ENCODE measurements at regions of chr14 and their contacts with region 1.

Region 1: GRCh38 chr14:65958664-65959562 is 527.3 kb upstream of the CCDC196 start:
- DNase-seq: peak; percentile 60
- ATAC-seq: peak; percentile 41
- H3K4me3 ChIP-seq: no peak overlapping the region
- H3K4me3 Mint-ChIP-seq: no peak overlapping the region
- H3K27ac ChIP-seq: no peak overlapping the region
- H3K27ac Mint-ChIP-seq: no peak overlapping the region
- H3K4me1 ChIP-seq: no peaks in the 10 kb centered on the region
- H3K4me1 Mint-ChIP-seq: no peaks in the 10 kb centered on the region
- H3K27me3 ChIP-seq: peaks cover 0 to 15% (median 7%) of the 10 kb centered on the region in 4 experiments
- H3K27me3 Mint-ChIP-seq: peaks cover 30% of the 10 kb centered on the region
- CTCF ChIP-seq: peak; percentile 74

Region 2: DNA sequence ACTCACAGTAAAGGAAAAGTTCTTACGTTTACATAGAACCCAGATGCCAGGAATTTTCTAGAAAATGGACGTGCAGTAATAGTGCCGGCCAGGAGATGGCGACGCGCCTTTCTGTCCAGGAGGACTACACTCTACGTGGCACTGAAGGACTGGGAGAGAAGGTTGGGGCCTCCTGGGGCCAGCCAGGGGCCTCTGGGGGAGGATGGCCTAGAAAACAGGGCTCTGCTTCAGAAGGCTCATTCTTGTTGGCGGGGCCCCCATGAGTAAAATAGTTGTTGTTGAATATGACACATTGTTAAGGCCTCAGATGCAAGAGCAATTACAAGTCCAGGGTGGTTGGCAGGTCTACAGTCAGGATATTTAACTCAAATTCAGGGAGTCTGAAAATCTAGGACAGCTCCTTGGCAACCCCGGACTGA is 736.5 kb before region 1 on chr14:
- CTCF ChIA-PET with region 1: no interaction called
- POLR2A ChIA-PET with region 1: no interaction called
- intact Hi-C with region 1: loop called (anchors 1 kb)
- DNase-seq: peak; percentile 72
- ATAC-seq: peak; percentile 89
- H3K4me3 ChIP-seq: no peak overlapping the region
- H3K4me3 Mint-ChIP-seq: no peak overlapping the region
- H3K27ac ChIP-seq: no peak overlapping the region
- H3K27ac Mint-ChIP-seq: peak overlapping the region; percentile 39
- H3K4me1 ChIP-seq: peaks cover 42 to 56% of the 10 kb centered on the region in 2 donors
- H3K4me1 Mint-ChIP-seq: peaks cover 49% of the 10 kb centered on the region
- H3K27me3 ChIP-seq: no peaks in the 10 kb centered on the region
- H3K27me3 Mint-ChIP-seq: no peaks in the 10 kb centered on the region
- CTCF ChIP-seq: peak; percentile 87

Region 3: DNA sequence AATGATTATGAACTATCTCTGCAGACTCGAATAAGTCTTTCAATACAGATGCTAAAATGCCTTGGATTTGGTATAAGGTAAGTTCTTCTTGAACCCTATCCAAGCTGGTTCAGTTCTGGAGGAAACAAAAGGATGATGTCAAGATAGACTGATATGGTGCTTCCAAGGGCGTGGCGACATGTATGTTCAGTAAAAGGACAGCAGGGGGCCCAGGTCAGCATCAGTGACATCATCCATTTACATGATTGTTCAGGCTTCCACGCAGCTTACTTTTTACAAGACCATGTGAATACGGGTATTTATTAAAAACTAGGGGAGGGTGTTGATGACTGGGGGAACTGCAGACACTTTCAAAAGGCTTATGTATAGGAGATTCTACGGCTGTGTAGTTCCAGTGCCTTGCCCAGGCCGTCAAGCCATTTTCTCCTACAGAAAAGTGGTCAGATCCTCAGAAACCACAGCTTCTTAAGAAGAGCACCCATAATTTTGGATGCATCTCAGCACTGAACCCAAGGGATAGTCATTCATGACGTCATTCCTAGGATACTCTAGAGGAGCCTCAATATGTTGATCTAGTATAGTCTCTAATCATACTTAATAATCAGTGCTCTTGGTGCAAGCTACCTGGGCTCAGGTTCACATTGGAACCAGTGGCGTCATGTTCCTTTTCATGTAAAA is 18.7 kb before region 1 on chr14:
- CTCF ChIA-PET with region 1: interaction called, 11 read pairs
- POLR2A ChIA-PET with region 1: no interaction called
- intact Hi-C with region 1: no loop called
- DNase-seq: no peak
- ATAC-seq: no peak
- H3K4me3 ChIP-seq: no peak overlapping the region
- H3K4me3 Mint-ChIP-seq: no peak overlapping the region
- H3K27ac ChIP-seq: no peak overlapping the region
- H3K27ac Mint-ChIP-seq: no peak overlapping the region
- H3K4me1 ChIP-seq: no peaks in the 10 kb centered on the region
- H3K4me1 Mint-ChIP-seq: no peaks in the 10 kb centered on the region
- H3K27me3 ChIP-seq: peaks cover 0 to 7% (median 0%) of the 10 kb centered on the region in 4 experiments
- H3K27me3 Mint-ChIP-seq: peaks cover 39% of the 10 kb centered on the region
- CTCF ChIP-seq: no peak

Region 4: GRCh38 chr14:67056684-67057083 is 1097.8 kb after region 1 on chr14:
- CTCF ChIA-PET with region 1: no interaction called
- POLR2A ChIA-PET with region 1: no interaction called
- intact Hi-C with region 1: no loop called
- DNase-seq: no peak
- ATAC-seq: no peak
- H3K4me3 ChIP-seq: no peak overlapping the region
- H3K4me3 Mint-ChIP-seq: no peak overlapping the region
- H3K27ac ChIP-seq: no peak overlapping the region
- H3K27ac Mint-ChIP-seq: no peak overlapping the region
- H3K4me1 ChIP-seq: no peaks in the 10 kb centered on the region
- H3K4me1 Mint-ChIP-seq: no peaks in the 10 kb centered on the region
- H3K27me3 ChIP-seq: no peaks in the 10 kb centered on the region
- H3K27me3 Mint-ChIP-seq: no peaks in the 10 kb centered on the region
- CTCF ChIP-seq: no peak

Measured in B cell (primary cell).